ENCODE measurements at regions of chr9 and their contacts with region 1.

Region 1: DNA sequence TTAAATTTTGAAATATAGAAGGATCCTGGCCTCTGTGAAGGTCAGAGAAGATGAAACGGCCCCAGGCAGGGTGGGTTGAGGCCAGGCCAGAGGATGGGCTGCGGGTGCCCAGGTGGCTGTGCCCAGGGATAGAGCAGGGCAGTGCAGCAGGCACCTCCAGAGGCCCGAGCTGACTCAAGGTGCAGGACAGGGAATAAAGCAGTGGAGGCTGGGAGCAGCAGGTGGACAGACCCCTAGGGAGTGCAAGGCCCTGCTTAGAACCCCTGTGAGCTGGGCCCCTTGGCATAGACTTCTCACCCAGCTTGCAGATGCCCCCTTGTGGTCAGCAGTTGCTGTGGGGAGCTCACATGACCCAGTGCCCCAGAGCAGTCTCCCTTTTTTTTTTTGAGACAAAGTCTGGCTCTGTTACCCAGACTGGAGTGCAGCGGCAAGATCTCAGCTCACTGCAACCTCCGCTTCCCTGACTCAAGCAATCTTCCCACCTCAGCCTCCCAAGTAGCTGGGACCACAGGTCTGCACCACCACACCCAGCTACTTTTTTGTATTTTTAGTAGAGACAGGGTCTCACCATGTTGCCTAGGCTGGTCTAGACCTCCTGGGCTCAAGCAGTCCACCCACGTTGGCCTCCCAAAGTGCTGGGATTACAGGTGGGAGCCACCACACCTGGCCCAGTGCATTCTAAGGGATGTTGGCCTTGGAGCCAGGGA is 118.8 kb downstream of the WNK2 start:
- DNase-seq: no peak
- ATAC-seq: peak; percentile 90
- H3K4me3 ChIP-seq: no peak overlapping the region
- H3K27ac ChIP-seq: no peak overlapping the region
- H3K4me1 ChIP-seq: no peaks in the 10 kb centered on the region
- H3K27me3 ChIP-seq: no peaks in the 10 kb centered on the region; a peak in 1 of 4 replicates
- CTCF ChIP-seq: peak; percentile 50 to 61 (median 57); a peak in 5 of 6 replicates
- EP300 ChIP-seq: no peak
- POLR2A ChIP-seq: no peak
- RAD21 ChIP-seq: peak; percentile 63

Region 2: DNA sequence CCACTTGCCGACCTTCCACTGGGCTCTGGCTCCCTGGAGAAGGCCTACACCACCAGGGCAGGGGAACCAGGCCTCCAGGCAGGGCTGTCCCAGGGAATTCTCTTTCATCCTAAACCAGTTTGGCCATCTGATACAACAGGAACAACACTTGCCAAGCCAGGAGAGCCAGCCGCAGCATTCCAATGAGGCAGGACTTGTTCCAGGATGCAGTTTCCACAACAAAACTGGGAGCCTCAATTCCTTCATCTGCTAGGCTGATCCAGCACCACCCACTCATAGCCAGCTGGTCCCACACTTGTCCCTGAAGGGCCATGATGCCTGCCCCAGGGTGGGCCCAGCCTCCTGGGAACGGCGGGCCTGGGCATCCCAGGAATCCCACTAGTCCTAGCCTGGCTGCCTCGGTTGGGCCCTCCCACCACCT is 564.0 kb before region 1 on chr9:
- CTCF ChIA-PET with region 1: no interaction called
- POLR2A ChIA-PET with region 1: no interaction called
- RAD21 ChIA-PET with region 1: no interaction called
- SMC1A ChIA-PET with region 1: no interaction called
- in situ Hi-C with region 1: no loop called
- intact Hi-C with region 1: no loop called
- DNase-seq: no peak
- ATAC-seq: no peak
- H3K4me3 ChIP-seq: no peak overlapping the region
- H3K27ac ChIP-seq: no peak overlapping the region
- H3K4me1 ChIP-seq: peaks cover 21% of the 10 kb centered on the region
- H3K27me3 ChIP-seq: no peaks in the 10 kb centered on the region
- CTCF ChIP-seq: no peak
- EP300 ChIP-seq: no peak
- POLR2A ChIP-seq: no peak
- RAD21 ChIP-seq: no peak

Region 3: GRCh38 chr9:92954049-92954861 is 348.4 kb before region 1 on chr9:
- CTCF ChIA-PET with region 1: interaction called, 7 read pairs
- POLR2A ChIA-PET with region 1: no interaction called
- RAD21 ChIA-PET with region 1: interaction called, 4 read pairs
- SMC1A ChIA-PET with region 1: interaction called, 3 read pairs
- in situ Hi-C with region 1: loop called (anchors 10 kb)
- intact Hi-C with region 1: loop called (anchors 1 kb)
- DNase-seq: peak; percentile 61
- ATAC-seq: peak; percentile 79
- H3K4me3 ChIP-seq: peak overlapping the region; percentile 3; the same call in 1 of the 2 replicates
- H3K27ac ChIP-seq: 0 out of 2 replicates have a peak overlapping the region, but pooled peaks have one; percentile 9
- H3K4me1 ChIP-seq: peaks cover 13% of the 10 kb centered on the region
- H3K27me3 ChIP-seq: peaks cover 1 to 5% of the 10 kb centered on the region in 2 experiments; a peak in 3 of 4 replicates
- CTCF ChIP-seq: no peak
- EP300 ChIP-seq: no peak
- POLR2A ChIP-seq: no peak
- RAD21 ChIP-seq: no peak

Region 4: GRCh38 chr9:93071464-93071863 is 231.2 kb before region 1 on chr9:
- CTCF ChIA-PET with region 1: no interaction called
- POLR2A ChIA-PET with region 1: no interaction called
- RAD21 ChIA-PET with region 1: no interaction called
- SMC1A ChIA-PET with region 1: no interaction called
- in situ Hi-C with region 1: no loop called
- intact Hi-C with region 1: no loop called
- DNase-seq: no peak
- ATAC-seq: peak; percentile 56
- H3K4me3 ChIP-seq: no peak overlapping the region
- H3K27ac ChIP-seq: no peak overlapping the region
- H3K4me1 ChIP-seq: no peaks in the 10 kb centered on the region
- H3K27me3 ChIP-seq: no peaks in the 10 kb centered on the region
- CTCF ChIP-seq: no peak
- EP300 ChIP-seq: no peak
- POLR2A ChIP-seq: no peak
- RAD21 ChIP-seq: no peak

Region 5: DNA sequence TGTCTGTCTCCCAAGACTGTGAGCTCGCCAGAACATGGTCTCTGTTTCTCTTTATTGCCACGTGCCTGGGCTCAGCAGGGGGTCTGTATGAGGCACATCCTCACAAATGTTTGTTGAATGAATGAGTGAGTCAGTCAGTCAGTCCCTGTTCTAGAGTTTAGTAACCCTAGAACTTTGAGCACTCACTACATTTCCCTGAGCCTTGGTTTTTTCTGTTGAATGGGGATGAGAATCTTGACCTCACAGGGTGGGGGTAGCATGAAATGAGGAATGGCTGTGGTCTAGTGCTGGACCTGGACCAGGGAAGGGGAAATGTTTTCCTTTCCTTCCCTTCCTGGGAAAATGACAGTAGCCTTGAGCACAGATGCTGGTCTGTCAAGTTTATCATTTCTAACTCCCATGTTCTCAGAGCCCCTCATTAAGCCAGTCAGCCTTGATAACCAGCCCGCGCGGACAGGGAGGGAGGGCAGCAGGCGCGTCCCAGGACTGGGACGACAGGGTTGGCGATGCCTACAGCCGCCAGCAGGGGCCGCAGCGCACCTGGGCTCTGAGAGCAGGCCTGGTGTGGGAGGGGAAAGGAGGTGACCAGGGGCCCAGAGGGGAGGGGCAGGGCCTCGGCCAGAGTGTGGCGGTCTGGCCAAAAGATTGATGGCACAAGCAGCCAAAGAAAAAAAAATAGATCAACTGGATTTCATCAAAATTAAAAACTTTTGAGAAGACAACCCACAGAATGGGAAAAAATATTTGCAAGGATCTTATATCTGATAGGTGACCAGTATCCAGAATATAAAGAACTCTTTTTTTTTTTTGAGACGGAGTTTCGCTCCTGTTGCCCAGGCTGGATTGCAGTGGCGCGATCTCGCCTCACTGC is 142.9 kb before region 1 on chr9:
- CTCF ChIA-PET with region 1: interaction called, 8 read pairs
- POLR2A ChIA-PET with region 1: no interaction called
- RAD21 ChIA-PET with region 1: interaction called, 5 read pairs
- SMC1A ChIA-PET with region 1: interaction called, 3 read pairs
- in situ Hi-C with region 1: loop called (anchors 5 kb)
- intact Hi-C with region 1: loop called (anchors 1 kb)
- DNase-seq: no peak
- ATAC-seq: peak; percentile 98
- H3K4me3 ChIP-seq: no peak overlapping the region
- H3K27ac ChIP-seq: no peak overlapping the region
- H3K4me1 ChIP-seq: peaks cover 5% of the 10 kb centered on the region
- H3K27me3 ChIP-seq: no peaks in the 10 kb centered on the region; a peak in 1 of 4 replicates
- CTCF ChIP-seq: peak; percentile 98 to 100 (median 98); a peak in 5 of 6 replicates
- EP300 ChIP-seq: no peak
- POLR2A ChIP-seq: no peak
- RAD21 ChIP-seq: peak; percentile 98